Activated CD4-positive, alpha-beta T cell treated with anti-CD3 and anti-CD28 coated beads for 36 hours (primary cell): ENCODE measurements at regions of chr18 and their contacts with region 1.

Region 1: DNA sequence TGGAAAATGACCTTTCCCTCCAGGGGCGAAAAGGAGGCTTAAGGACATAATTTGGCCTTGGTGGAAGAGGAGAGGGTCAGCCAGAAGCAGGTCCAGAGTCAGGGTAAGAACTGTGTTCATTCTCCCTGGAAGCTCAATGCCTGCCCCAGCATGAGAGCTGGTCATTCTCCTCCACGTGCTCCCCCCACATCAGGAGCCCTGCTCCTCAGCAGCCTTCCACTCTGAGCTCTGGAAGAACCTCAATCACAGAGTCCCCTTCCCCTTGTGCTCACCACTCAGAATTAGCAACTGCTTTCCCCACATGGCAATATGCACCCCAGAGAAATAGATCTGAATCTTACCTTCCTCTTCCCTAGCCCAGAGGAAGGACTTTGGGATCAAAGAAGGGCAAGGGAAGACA is 115.4 kb downstream of the TMEM200C start:
- DNase-seq: no peak
- ATAC-seq: no peak
- H3K4me3 Mint-ChIP-seq: no peak overlapping the region
- H3K27ac Mint-ChIP-seq: no peak overlapping the region
- H3K4me1 Mint-ChIP-seq: no peaks in the 10 kb centered on the region
- H3K27me3 Mint-ChIP-seq: peaks cover 16% of the 10 kb centered on the region

Region 2: GRCh38 chr18:5073026-5073944 is 706.6 kb before region 1 on chr18:
- CTCF ChIA-PET with region 1: no interaction called
- POLR2A ChIA-PET with region 1: no interaction called
- intact Hi-C with region 1: no loop called
- DNase-seq: peak; percentile 46
- ATAC-seq: peak; percentile 76
- H3K4me3 Mint-ChIP-seq: no peak overlapping the region
- H3K27ac Mint-ChIP-seq: no peak overlapping the region
- H3K4me1 Mint-ChIP-seq: peaks cover 3% of the 10 kb centered on the region
- H3K27me3 Mint-ChIP-seq: peaks cover under 1% of the 10 kb centered on the region

Region 3: DNA sequence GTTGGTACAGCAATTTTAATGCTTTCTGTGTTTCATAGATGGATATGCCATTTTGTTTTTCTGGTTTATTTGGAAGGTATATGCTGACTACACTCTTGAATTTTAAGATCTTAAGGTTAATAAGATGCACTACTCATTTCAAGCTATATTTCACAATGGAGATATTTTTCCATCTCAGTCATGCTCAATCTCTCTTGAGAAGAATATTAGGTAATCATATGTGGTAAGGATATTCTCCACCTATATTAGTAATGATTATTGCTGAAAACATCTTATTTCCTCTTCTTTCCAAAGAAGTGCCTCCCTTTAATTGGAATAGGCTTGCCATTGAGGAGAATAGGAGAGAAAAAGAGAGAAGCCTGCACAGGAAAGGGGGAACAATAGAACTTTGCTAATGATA is 276.2 kb before region 1 on chr18:
- CTCF ChIA-PET with region 1: no interaction called
- POLR2A ChIA-PET with region 1: no interaction called
- intact Hi-C with region 1: no loop called
- DNase-seq: no peak
- ATAC-seq: no peak
- H3K4me3 Mint-ChIP-seq: no peak overlapping the region
- H3K27ac Mint-ChIP-seq: no peak overlapping the region
- H3K4me1 Mint-ChIP-seq: peaks cover 5% of the 10 kb centered on the region
- H3K27me3 Mint-ChIP-seq: peaks cover 7% of the 10 kb centered on the region

Region 4: GRCh38 chr18:5646739-5647138 is 133.2 kb before region 1 on chr18:
- CTCF ChIA-PET with region 1: no interaction called
- POLR2A ChIA-PET with region 1: no interaction called
- intact Hi-C with region 1: no loop called
- DNase-seq: no peak
- ATAC-seq: no peak
- H3K4me3 Mint-ChIP-seq: no peak overlapping the region
- H3K27ac Mint-ChIP-seq: no peak overlapping the region
- H3K4me1 Mint-ChIP-seq: no peaks in the 10 kb centered on the region
- H3K27me3 Mint-ChIP-seq: peaks cover 3% of the 10 kb centered on the region

Region 5: GRCh38 chr18:5759194-5759593 is 20.7 kb before region 1 on chr18:
- CTCF ChIA-PET with region 1: no interaction called
- POLR2A ChIA-PET with region 1: no interaction called
- intact Hi-C with region 1: loop called in 1 of 2 experiments (anchors 2 kb)
- DNase-seq: no peak
- ATAC-seq: no peak
- H3K4me3 Mint-ChIP-seq: no peak overlapping the region
- H3K27ac Mint-ChIP-seq: no peak overlapping the region
- H3K4me1 Mint-ChIP-seq: no peaks in the 10 kb centered on the region
- H3K27me3 Mint-ChIP-seq: peaks cover 9% of the 10 kb centered on the region